Left lung (tissue), 14 donors: ENCODE measurements at regions of chr16 and their contacts with region 1.

Region 1: GRCh38 chr16:15440852-15441251 is 6.5 kb downstream of the BMERB1 start:
- DNase-seq: no peak
- ATAC-seq: no peak
- H3K4me3 ChIP-seq: no peak overlapping the region
- H3K27ac ChIP-seq: no peak overlapping the region
- H3K4me1 ChIP-seq: no peaks in the 10 kb centered on the region
- H3K27me3 ChIP-seq: peaks cover under 1 to 17% of the 10 kb centered on the region in 2 donors
- CTCF ChIP-seq: no peak

Region 2: DNA sequence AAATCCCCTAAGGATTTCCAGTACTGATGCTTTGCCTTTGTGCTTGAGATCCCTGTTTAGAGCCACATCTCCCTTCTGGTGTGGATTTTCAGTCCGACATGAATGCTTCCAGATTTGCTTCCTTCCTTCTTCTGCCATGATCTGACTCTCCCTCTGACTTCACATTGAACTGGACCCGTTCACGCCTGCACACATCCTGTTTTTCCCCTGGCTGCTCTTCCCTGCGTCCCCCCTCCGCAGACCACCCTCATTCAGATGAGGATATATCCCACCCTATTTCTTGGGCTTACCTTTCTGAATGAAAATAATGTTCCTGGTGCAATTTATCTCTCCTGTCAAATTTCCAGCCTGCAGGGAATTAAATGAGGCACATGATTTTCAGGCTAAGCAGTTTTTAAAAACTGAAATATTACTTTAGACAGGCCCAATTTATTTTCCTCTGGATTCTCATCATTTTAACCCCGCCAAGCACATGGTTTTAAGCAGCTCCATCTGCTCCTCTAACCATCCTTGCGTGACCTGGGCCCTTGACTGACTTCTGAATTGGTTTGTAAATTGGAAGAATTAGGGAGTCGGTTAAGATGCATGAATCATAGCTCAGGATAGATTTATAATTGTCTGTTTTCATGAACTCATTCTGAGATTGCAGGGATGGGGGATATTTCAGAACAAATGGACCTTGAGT is 52.8 kb after region 1 on chr16:
- intact Hi-C with region 1: loop called in 1 of 2 experiments (anchors 10 kb)
- DNase-seq: no peak
- ATAC-seq: no peak
- H3K4me3 ChIP-seq: no peak overlapping the region
- H3K27ac ChIP-seq: no peak overlapping the region
- H3K4me1 ChIP-seq: peaks cover 0 to 20% of the 10 kb centered on the region in 2 donors
- H3K27me3 ChIP-seq: no peaks in the 10 kb centered on the region
- CTCF ChIP-seq: no peak

Region 3: DNA sequence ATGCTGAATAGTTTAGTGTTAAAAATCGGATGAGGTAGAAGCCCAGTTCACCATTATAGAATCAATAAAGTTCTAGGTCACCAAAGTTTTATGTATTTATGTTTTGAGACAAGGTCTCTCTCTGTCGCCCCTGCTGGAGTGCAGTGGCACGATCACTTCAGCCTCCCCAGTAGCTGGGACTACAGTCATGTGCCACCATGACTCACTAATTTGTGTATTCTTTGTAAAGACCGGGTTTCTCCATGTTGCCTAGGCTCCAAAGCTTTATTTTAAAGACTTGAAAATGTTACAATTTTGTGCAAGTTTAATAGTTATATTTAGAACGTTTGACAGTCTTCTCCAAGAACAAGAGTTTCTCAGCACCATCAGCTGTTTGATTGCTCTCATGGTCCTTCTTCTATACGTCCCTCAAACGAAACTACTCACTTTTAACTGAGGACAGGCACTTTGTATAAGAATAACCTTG is 241.3 kb after region 1 on chr16:
- intact Hi-C with region 1: no loop called
- DNase-seq: peak in 1 of 4 donors; percentile 50
- ATAC-seq: peak; percentile 81
- H3K4me3 ChIP-seq: no peak overlapping the region
- H3K27ac ChIP-seq: peak overlapping the region in 1 of 2 donors; percentile 24
- H3K4me1 ChIP-seq: no peaks in the 10 kb centered on the region
- H3K27me3 ChIP-seq: no peaks in the 10 kb centered on the region
- CTCF ChIP-seq: peak in 1 of 2 donors; percentile 61